Dorsolateral prefrontal cortex (tissue), 120 donors: ENCODE measurements at regions of chr6 and their contacts with region 1.

Region 1: DNA sequence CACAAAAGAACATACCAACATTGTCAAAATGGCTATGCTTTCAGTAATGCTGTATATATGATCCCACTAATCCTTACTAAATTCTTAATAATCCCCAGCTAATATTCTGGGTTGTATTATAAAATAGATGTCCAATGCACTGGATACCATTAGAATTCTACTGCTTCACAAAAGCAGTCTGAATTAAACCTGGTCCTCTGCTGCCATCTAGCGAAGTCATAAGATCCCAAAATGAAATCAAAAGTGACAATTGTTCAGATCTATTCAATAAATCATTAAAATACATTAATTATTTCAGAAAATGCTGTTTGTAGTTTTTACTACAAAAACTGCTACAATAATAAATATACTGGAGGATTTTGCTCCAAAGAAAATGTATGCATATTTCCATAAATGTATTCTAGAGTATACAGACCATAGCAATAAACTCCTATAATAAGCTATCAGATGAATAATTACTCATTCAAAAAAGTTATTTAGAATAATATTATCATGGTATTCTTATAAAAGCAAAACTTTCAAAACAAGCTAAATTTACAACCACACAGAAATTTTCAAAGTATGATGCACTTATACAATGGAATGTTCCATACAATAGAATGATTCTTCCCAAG is 92.6 kb downstream of the RNGTT start:
- DNase-seq: peak in 2 of 10 donors; percentile 30 to 45
- H3K4me3 ChIP-seq: no peak overlapping the region
- H3K27ac ChIP-seq: no peak overlapping the region
- H3K27me3 ChIP-seq: no peaks in the 10 kb centered on the region
- CTCF ChIP-seq: peak; percentile 58 to 92 (median 77)

Region 2: DNA sequence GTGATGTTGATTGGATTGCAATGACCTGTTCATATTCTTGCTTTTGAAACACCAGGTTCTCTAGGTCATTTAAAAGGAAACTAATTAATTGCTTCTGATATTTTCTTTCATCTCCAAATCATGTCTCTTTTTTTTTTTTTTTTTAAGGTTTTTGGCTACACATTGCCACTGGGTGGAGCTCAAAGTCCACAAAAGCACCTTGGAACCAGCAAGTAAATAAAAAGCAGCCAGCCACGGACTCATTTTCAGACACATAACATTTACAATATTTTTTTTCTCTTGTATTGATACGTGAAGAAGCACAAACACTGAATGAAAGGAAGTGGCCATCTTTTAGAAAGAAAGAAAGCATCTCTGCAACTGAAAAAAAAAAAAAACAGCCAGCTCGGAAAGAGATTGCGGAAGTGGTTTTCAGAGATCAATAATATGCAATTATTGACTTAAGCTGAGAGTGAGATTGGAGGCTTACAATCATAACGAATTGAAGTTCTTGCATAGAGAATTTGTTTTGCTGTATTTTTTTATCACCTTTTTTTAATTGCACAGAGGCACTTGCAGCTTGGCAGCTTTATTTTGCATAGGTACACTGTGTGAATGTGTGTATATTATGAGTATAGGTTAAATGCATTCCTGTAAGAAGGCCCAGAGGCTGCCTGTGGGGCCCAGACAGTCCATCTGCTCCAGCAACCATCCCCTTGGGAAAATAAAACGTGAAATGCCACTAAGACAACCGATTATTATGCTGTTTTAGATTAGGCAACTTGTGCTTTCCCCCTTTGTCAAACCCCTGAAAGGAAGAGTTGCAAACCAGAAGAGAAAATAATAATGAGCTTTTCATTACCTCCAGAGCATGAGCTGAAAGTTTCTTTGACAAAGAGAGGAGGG is 1804.1 kb before region 1 on chr6:
- intact Hi-C with region 1: loop called in 1 of 2 experiments (anchors 10 kb)
- DNase-seq: peak in 3 of 10 donors; percentile 22 to 31 (median 25)
- H3K4me3 ChIP-seq: peak overlapping the region in 55 of 59 donors; percentile 10 to 65 (median 44)
- H3K27ac ChIP-seq: peak overlapping the region in 1 of 59 donors; percentile 7
- H3K27me3 ChIP-seq: peaks cover 0 to 4% (median 0%) of the 10 kb centered on the region in 45 donors
- CTCF ChIP-seq: peak; percentile 26 to 87 (median 62)

Region 3: DNA sequence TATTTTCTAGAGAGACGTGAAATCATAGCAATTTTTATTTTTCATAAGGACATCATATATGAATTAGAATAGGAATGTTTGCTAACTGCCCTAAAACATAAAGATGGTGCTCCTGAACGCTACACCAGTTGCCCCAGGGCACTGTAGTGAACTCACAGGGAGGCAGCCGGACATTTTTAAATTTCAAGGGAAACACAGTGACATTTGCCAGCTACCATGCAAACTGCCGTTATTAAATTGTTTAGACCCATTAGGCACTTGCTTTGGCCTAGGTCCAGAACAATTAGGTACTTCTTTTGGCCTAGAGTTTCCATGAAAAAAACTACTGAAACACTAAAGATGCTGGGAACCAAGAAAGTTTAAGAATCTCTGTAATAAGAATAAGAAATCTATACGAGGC is 1488.0 kb before region 1 on chr6:
- intact Hi-C with region 1: loop called in 1 of 2 experiments (anchors 10 kb)
- DNase-seq: no peak
- H3K4me3 ChIP-seq: no peak overlapping the region
- H3K27ac ChIP-seq: no peak overlapping the region
- H3K27me3 ChIP-seq: no peaks in the 10 kb centered on the region
- CTCF ChIP-seq: no peak

Region 4: DNA sequence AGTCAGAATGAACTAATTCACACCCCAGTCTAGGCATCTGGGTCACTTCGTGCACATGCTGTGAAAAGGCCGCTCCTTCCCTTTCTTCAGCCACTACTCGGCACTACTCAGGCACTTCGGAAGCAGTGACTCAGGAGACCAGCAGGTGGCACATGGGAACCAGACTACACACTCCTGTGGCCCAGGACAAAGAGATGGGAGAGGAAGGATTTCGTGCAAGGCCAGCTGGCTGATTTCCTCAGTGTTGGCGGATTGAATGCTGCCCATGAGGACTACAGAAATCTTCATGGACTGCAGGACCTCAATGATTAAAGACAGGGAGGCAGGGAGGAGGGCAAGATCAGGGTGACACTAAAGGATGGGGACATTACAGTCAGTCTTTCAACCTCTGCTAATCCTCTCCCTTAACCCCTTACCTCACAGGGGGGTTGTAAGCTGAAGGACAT is 941.0 kb before region 1 on chr6:
- intact Hi-C with region 1: loop called in 1 of 2 experiments (anchors 5 kb)
- DNase-seq: peak; percentile 58 to 91 (median 84)
- H3K4me3 ChIP-seq: peak overlapping the region in 1 of 59 donors; percentile 16
- H3K27ac ChIP-seq: peak overlapping the region in 2 of 59 donors; percentile 23 to 25
- H3K27me3 ChIP-seq: no peaks in the 10 kb centered on the region
- CTCF ChIP-seq: peak; percentile 24 to 93 (median 80)

Region 5: DNA sequence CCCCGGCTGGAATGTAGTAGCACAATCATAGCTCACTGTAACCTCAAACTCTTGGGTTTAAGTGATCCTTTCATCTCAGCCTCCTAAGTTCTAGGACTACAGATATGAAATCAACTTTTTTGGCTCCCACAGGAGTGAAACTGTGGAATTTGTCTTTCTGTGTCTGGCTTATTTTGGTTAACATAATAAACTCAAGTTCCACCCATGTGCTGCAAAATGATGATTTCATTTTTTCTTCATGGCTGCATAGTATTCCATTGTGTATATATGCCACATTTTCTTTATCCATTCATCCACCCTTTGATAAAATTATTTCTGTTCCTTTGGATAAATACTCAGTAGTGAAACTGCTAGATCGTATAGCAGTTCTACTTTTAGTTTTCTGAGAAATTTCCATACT is 62.7 kb after region 1 on chr6:
- intact Hi-C with region 1: no loop called
- DNase-seq: no peak
- H3K4me3 ChIP-seq: no peak overlapping the region
- H3K27ac ChIP-seq: no peak overlapping the region
- H3K27me3 ChIP-seq: no peaks in the 10 kb centered on the region
- CTCF ChIP-seq: no peak